CD4-positive, alpha-beta memory T cell (primary cell): ENCODE measurements at regions of chr7 and their contacts with region 1.

Region 1: DNA sequence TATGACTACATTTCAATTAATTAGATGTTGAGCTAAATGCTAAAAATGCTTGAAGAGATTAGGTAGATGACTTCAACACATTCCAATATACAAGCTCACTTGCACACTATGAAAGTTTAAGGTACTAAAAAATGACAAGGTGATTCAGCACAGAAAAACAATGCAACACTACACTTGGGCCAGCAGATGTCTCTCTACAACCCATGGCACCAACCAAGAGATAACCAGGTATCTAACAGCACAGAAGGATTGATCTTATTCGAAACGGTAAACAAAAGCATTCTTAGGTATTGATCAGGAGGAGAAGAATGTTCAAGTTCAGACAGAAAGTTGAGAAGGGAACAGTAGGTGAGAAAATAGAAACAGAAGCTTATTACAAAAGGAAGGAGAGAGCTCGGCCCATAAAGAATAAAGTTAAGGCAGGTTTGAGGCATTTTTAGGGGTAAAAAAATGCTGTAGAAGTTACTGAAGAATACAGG is 248.2 kb upstream of the KLF14 start:
- DNase-seq: peak; percentile 62 to 70 (median 64)
- H3K4me3 ChIP-seq: no peak overlapping the region
- H3K4me3 Mint-ChIP-seq: no peak overlapping the region
- H3K27ac ChIP-seq: peak overlapping the region; percentile 50
- H3K27ac Mint-ChIP-seq: no peak overlapping the region
- H3K4me1 ChIP-seq: peaks cover 77% of the 10 kb centered on the region
- H3K4me1 Mint-ChIP-seq: peaks cover 24 to 48% (median 38%) of the 10 kb centered on the region in 4 donors
- H3K27me3 ChIP-seq: no peaks in the 10 kb centered on the region
- H3K27me3 Mint-ChIP-seq: no peaks in the 10 kb centered on the region

Region 2: GRCh38 chr7:130781346-130781745 is 200.9 kb before region 1 on chr7:
- CTCF ChIA-PET with region 1: no interaction called
- POLR2A ChIA-PET with region 1: no interaction called
- intact Hi-C with region 1: no loop called
- DNase-seq: no peak
- H3K4me3 ChIP-seq: no peak overlapping the region
- H3K4me3 Mint-ChIP-seq: no peak overlapping the region
- H3K27ac ChIP-seq: no peak overlapping the region
- H3K27ac Mint-ChIP-seq: no peak overlapping the region
- H3K4me1 ChIP-seq: no peaks in the 10 kb centered on the region
- H3K4me1 Mint-ChIP-seq: no peaks in the 10 kb centered on the region
- H3K27me3 ChIP-seq: peaks cover 6% of the 10 kb centered on the region
- H3K27me3 Mint-ChIP-seq: peaks cover 29 to 32% of the 10 kb centered on the region in 2 donors

Region 3: DNA sequence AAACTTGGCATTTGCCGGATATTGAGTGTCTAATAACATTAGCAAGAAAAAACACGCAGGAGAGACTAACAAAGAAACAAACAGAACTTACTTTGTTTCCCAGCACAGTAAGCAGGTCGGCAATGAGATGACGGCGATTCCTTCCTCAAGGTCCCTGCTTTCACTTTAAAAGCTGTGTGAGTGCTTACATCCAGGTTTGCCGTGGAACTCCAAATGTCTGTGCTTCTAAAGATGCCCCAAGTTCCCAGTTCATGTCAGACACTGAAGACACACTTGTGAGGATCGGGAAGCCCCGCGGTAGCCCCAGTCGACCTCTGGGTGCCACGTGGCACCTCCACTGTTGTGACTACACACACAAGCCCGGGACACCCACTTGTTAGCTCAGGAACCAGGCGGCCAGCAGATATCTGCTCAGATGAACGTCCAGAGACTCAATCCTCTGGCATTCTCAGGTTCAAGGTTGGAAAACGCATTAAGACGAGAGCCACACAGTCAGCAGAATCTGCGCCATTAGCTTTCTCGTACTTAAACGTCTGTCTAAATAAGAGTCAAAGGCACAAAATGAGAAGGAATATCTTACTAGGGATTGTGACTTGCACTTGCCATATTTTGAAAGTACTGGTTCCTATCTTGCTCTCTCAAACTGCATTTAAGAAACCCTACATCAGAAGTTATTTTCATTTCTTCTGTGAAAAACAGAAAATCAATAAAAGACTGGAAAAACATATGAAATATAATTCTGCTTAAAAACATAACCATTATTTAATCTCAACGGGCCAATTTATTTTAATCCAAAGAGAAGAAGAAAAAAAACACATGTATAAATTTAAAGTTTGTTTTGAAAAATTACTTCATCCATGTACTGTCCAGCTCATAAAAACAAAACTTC is 40.6 kb before region 1 on chr7:
- CTCF ChIA-PET with region 1: interaction called, 16 read pairs
- POLR2A ChIA-PET with region 1: interaction called, 4 read pairs
- intact Hi-C with region 1: no loop called
- DNase-seq: peak in 3 of 5 donors; percentile 44 to 73 (median 44)
- H3K4me3 ChIP-seq: peak overlapping the region; percentile 51 to 52
- H3K4me3 Mint-ChIP-seq: peak overlapping the region; percentile 89 to 97 (median 94)
- H3K27ac ChIP-seq: peak overlapping the region; percentile 77
- H3K27ac Mint-ChIP-seq: peak overlapping the region in 6 of 7 donors; percentile 93 to 99 (median 98)
- H3K4me1 ChIP-seq: peaks cover 97% of the 10 kb centered on the region
- H3K4me1 Mint-ChIP-seq: peaks cover 74 to 96% (median 86%) of the 10 kb centered on the region in 4 donors
- H3K27me3 ChIP-seq: no peaks in the 10 kb centered on the region
- H3K27me3 Mint-ChIP-seq: peaks cover 0 to 2% of the 10 kb centered on the region in 2 donors

Region 4: DNA sequence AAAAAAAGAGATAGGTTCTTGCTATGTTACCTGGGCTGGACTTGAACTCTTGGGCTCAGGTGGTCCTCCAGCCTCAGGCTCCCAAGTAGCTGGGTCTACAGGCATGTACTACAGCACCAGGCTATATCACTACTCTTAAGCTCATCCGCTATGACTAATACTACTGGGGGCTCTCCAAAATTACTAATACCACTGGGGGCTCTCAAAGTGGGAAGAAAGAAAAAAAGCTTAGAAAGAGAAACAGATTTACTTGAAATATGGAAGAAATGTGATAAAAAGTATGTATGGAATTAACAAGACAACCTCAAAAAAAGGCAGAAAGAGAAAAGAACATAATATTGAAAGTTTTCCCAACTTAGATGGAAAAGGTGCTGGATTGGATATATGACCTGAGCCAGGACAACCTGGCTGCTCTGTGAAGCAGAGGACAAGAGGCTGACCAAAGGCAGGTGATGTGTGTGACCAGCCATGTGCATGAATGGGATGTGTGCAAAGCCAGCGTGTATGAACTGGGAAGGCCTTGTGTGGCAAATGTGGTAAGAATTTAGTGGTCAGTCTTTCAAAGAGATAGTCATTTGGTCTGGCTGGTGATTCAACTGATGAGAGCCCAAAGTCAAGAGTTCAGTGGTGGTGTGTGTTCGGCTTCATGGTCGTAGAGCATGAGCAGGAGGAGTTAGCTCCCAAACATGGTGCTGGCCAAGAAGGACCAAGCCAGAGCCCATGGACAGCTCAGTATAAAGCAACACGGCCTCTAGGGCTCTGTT is 15.8 kb before region 1 on chr7:
- CTCF ChIA-PET with region 1: interaction called, 28 read pairs
- POLR2A ChIA-PET with region 1: interaction called, 5 read pairs
- intact Hi-C with region 1: loop called (anchors 1 kb)
- DNase-seq: no peak
- H3K4me3 ChIP-seq: no peak overlapping the region
- H3K4me3 Mint-ChIP-seq: peak overlapping the region in 1 of 8 donors; percentile 4
- H3K27ac ChIP-seq: no peak overlapping the region
- H3K27ac Mint-ChIP-seq: peak overlapping the region in 6 of 7 donors; percentile 31 to 94 (median 64)
- H3K4me1 ChIP-seq: peaks cover 73% of the 10 kb centered on the region
- H3K4me1 Mint-ChIP-seq: peaks cover 47 to 66% (median 56%) of the 10 kb centered on the region in 4 donors
- H3K27me3 ChIP-seq: no peaks in the 10 kb centered on the region
- H3K27me3 Mint-ChIP-seq: no peaks in the 10 kb centered on the region

Region 5: GRCh38 chr7:131007394-131008330 is 25.5 kb after region 1 on chr7:
- CTCF ChIA-PET with region 1: interaction called, 43 read pairs
- POLR2A ChIA-PET with region 1: interaction called, 5 read pairs
- intact Hi-C with region 1: loop called (anchors 1 kb)
- DNase-seq: peak; percentile 65 to 75 (median 68)
- H3K4me3 ChIP-seq: peak overlapping the region in 1 of 2 donors; percentile 13
- H3K4me3 Mint-ChIP-seq: peak overlapping the region in 7 of 8 donors; percentile 13 to 86 (median 69)
- H3K27ac ChIP-seq: peak overlapping the region; percentile 57
- H3K27ac Mint-ChIP-seq: peak overlapping the region; percentile 84 to 99 (median 94)
- H3K4me1 ChIP-seq: peaks cover 86% of the 10 kb centered on the region
- H3K4me1 Mint-ChIP-seq: peaks cover 66 to 94% (median 82%) of the 10 kb centered on the region in 4 donors
- H3K27me3 ChIP-seq: no peaks in the 10 kb centered on the region
- H3K27me3 Mint-ChIP-seq: no peaks in the 10 kb centered on the region

Region 6: GRCh38 chr7:131302876-131303707 is 320.9 kb after region 1 on chr7:
- CTCF ChIA-PET with region 1: interaction called, 5 read pairs
- POLR2A ChIA-PET with region 1: no interaction called
- intact Hi-C with region 1: loop called (anchors 1 kb)
- DNase-seq: peak in 4 of 5 donors; percentile 24 to 28 (median 25)
- H3K4me3 ChIP-seq: no peak overlapping the region
- H3K4me3 Mint-ChIP-seq: no peak overlapping the region
- H3K27ac ChIP-seq: no peak overlapping the region
- H3K27ac Mint-ChIP-seq: peak overlapping the region in 1 of 7 donors; percentile 25
- H3K4me1 ChIP-seq: no peaks in the 10 kb centered on the region
- H3K4me1 Mint-ChIP-seq: peaks cover 0 to 2% (median 0%) of the 10 kb centered on the region in 4 donors
- H3K27me3 ChIP-seq: no peaks in the 10 kb centered on the region
- H3K27me3 Mint-ChIP-seq: no peaks in the 10 kb centered on the region